ENCODE measurements at regions of chr1 and their contacts with region 1.

Region 1: DNA sequence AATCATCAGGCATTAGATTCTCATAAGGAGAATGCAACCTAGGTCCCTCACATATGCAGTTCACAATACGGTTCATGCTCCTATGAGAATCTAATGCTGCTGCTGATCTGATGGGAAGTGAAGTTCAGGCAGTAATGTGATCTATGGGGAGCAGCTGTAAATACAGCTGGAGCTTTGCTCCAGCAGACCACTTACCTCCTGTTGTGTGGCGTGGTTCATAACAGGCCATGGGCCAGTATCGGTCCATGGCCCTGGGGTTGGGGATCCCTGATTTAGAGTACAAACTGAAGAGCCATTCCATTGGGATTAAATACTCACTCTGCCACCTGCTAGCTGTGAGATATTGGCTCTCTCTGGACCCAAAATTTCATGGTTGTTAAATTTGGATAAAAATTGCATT is 244.6 kb upstream of the POGK start:
- DNase-seq: no peak
- ATAC-seq: no peak
- H3K4me3 ChIP-seq: no peak overlapping the region
- H3K4me3 Mint-ChIP-seq: no peak overlapping the region
- H3K27ac ChIP-seq: no peak overlapping the region
- H3K27ac Mint-ChIP-seq: no peak overlapping the region
- H3K4me1 ChIP-seq: no peaks in the 10 kb centered on the region
- H3K4me1 Mint-ChIP-seq: no peaks in the 10 kb centered on the region
- H3K27me3 ChIP-seq: no peaks in the 10 kb centered on the region
- H3K27me3 Mint-ChIP-seq: peaks cover 15% of the 10 kb centered on the region
- CTCF ChIP-seq: no peak

Region 2: DNA sequence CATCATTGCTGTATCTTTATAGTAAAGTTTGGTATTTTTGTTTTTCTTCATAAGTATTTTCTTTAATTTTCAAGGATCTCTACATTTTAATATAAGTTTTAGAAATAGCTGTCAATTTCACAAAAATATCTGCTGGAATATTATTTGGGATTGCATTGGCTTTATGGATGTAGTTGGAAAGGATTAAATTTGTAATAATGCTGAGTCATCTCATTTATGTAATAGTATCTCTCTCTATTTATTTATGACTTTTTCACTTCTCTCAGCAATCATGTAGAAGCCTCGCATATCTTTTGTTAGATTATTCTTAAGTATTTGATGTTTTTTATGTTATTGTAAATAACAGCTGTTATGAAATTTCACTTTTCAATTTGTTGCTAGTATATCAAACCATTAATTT is 21.6 kb after region 1 on chr1:
- CTCF ChIA-PET with region 1: no interaction called
- POLR2A ChIA-PET with region 1: no interaction called
- intact Hi-C with region 1: loop called in 1 of 2 experiments (anchors 1 kb)
- DNase-seq: no peak
- ATAC-seq: no peak
- H3K4me3 ChIP-seq: no peak overlapping the region
- H3K4me3 Mint-ChIP-seq: no peak overlapping the region
- H3K27ac ChIP-seq: no peak overlapping the region
- H3K27ac Mint-ChIP-seq: no peak overlapping the region
- H3K4me1 ChIP-seq: no peaks in the 10 kb centered on the region
- H3K4me1 Mint-ChIP-seq: no peaks in the 10 kb centered on the region
- H3K27me3 ChIP-seq: no peaks in the 10 kb centered on the region
- H3K27me3 Mint-ChIP-seq: peaks cover 13% of the 10 kb centered on the region
- CTCF ChIP-seq: no peak